Activated CD8-positive, alpha-beta T cell treated with anti-CD3 and anti-CD28 coated beads for 36 hours (primary cell): ENCODE measurements at regions of chr17 and their contacts with region 1.

Region 1: GRCh38 chr17:78401246-78401645 is 22.8 kb downstream of the PGS1 start:
- DNase-seq: no peak
- ATAC-seq: no peak
- H3K4me3 Mint-ChIP-seq: no peak overlapping the region
- H3K27ac Mint-ChIP-seq: peak overlapping the region; percentile 25
- H3K4me1 Mint-ChIP-seq: peaks cover under 1% of the 10 kb centered on the region
- H3K27me3 Mint-ChIP-seq: no peaks in the 10 kb centered on the region
- CTCF ChIP-seq: no peak

Region 2: GRCh38 chr17:78337244-78338109 is 63.8 kb before region 1 on chr17:
- CTCF ChIA-PET with region 1: no interaction called
- POLR2A ChIA-PET with region 1: no interaction called
- intact Hi-C with region 1: no loop called
- DNase-seq: no peak
- ATAC-seq: no peak
- H3K4me3 Mint-ChIP-seq: no peak overlapping the region
- H3K27ac Mint-ChIP-seq: no peak overlapping the region
- H3K4me1 Mint-ChIP-seq: peaks cover 29% of the 10 kb centered on the region
- H3K27me3 Mint-ChIP-seq: no peaks in the 10 kb centered on the region
- CTCF ChIP-seq: no peak

Region 3: GRCh38 chr17:78390241-78391050 is 10.8 kb before region 1 on chr17:
- CTCF ChIA-PET with region 1: interaction called, 4 read pairs
- POLR2A ChIA-PET with region 1: interaction called, 10 read pairs
- intact Hi-C with region 1: no loop called
- DNase-seq: peak; percentile 30
- ATAC-seq: no peak
- H3K4me3 Mint-ChIP-seq: no peak overlapping the region
- H3K27ac Mint-ChIP-seq: peak overlapping the region; percentile 66
- H3K4me1 Mint-ChIP-seq: peaks cover 50% of the 10 kb centered on the region
- H3K27me3 Mint-ChIP-seq: no peaks in the 10 kb centered on the region
- CTCF ChIP-seq: no peak

Region 4: DNA sequence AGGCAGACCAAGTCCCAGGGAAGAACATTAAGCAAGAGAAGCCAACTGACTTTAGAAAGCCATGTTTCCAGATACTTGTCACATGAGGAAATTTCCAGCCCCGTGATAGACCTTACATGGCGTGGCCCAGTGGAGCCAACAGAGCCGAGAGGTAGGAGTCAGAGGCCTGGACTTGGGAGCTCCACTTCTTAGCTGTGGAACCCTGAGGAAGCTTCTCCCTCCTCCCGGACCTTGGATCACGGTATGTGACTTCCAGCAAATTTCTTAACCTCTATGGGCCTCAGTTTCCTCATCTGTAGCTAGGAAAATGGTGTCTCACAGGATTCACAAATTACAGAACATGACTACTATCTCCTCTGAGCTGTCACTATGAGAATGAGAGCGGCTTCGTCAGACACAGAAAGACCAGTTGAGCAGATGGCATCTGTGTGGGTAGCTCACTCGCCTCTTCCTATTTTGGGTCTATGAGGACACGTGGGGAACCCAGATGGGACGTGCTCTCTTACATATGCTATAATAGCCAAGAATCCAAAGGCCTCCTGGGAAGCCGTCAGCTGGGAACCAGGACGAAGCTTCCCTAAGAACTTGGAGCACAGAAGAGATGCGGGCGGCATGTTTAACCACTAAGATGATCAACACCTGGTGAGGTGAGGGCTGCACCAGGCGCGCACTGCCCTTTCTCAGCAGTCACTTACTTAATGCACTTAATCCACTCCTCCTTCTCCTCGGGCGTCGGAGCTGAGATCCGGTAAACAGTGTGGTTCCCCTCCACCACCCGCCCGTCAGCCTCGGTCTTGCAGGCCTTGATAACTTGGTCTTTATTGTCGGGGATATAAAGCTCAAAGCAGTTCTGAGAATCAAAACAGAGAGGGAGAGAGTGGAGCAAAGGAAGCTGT is 278.5 kb after region 1 on chr17:
- CTCF ChIA-PET with region 1: no interaction called
- POLR2A ChIA-PET with region 1: no interaction called
- intact Hi-C with region 1: no loop called
- DNase-seq: no peak
- ATAC-seq: no peak
- H3K4me3 Mint-ChIP-seq: no peak overlapping the region
- H3K27ac Mint-ChIP-seq: peak overlapping the region; percentile 5
- H3K4me1 Mint-ChIP-seq: peaks cover 3% of the 10 kb centered on the region
- H3K27me3 Mint-ChIP-seq: no peaks in the 10 kb centered on the region
- CTCF ChIP-seq: no peak